Left colon (tissue), 2 donors: ENCODE measurements at regions of chr3 and their contacts with region 1.

Region 1: GRCh38 chr3:8970971-8971589 is 7.8 kb upstream of the RAD18 start:
- DNase-seq: peak in 1 of 2 donors; percentile 66
- ATAC-seq: peak; percentile 53

Region 2: DNA sequence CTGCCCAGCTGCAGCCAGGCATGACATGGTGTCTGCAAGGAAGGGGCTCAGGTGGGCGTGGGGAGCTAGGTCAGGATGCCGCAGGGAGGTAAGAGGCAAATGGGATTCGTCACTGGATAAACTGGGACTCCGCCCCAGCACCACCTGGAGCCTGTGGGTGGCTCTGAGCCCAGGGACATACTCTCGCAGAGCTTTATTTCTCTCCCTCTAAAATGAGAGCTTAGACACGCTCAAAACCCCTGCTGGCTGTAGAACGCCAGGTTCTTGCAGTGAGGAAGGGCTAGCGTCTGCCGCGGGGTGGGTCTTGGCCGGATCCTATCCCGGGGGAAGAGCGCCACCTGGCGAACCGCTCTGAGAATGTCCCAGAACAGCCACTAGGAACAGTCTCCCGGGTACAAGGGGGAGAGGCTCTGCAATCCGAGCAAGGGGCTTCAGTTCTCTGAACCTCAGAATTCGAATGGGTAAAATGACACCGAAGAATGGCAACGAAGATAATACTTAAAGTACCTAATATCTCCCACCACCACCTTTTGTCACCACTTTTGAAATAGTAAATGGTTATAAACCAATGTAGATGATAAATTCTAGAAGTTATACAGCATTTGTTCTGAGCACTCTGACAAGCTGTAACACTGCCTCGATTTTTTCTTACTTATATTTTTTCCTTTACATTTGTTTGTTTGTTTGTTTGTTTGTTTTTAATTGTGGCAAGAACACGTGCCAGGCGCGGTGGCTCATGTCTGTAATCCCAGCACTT is 331.5 kb after region 1 on chr3:
- intact Hi-C with region 1: loop called in 1 of 2 experiments (anchors 2 kb)
- DNase-seq: peak; percentile 63 to 84
- ATAC-seq: peak; percentile 94